Mammary epithelial cell (primary cell): ENCODE measurements at regions of chr1 and their contacts with region 1.

Region 1: GRCh38 chr1:186680245-186681061 is at the start of gene PTGS2:
- DNase-seq: peak; percentile 97
- H3K4me3 ChIP-seq: peak within 1 kb of the TSS; percentile 84 to 99 (median 97)
- H3K27ac ChIP-seq: peak within 1 kb of the TSS; percentile 98
- H3K4me1 ChIP-seq: peaks cover 7% of the 10 kb centered on the region
- H3K27me3 ChIP-seq: no peaks in the 10 kb centered on the region
- CTCF ChIP-seq: peak; percentile 43 to 80
- total RNA-seq, gene PTGS2: 11.7 to 304 TPM

Region 2: DNA sequence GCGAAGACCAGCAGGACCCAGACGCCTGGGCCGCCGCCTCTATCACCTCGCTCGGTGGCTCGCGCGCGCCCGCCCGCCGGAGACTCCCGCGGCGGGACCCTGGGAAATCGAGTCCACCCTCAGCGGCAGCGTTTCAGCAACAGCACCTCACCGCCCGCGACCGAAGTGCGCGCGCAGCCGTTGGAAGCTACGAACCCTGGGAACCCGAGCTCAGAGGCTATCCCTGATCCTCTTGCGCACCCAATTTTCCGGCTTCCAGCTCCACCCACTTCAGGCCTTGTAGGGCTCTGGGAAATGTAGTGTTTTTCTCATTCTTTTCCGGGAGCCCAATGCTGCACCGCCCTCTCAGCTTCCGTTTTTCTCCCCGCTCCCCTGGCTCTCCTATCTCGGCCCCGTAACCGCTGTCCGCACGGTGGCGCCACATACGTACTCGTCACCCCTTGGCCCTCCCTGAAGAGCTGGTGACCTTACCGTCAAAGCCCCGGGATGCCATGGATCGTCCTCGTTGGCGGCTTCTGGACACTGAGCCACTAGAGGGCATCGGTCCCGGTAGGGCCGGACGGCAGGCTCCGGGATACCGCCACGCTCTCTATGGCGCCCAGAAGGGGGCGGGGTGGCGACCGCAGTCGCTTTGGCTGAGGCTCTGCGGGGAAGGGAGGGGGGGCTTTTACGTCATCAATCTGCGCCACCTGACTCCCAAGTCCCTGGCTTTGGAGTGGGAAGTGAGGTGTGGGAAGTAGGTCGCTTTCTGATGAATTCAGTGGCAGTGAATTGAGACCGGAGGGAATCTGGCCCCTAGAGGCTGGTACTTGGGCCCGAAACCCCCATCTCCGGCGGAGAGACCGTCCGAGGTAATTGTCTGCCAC is 305.1 kb before region 1 on chr1 and contains the starts of genes ODR4 and TPR:
- CTCF ChIA-PET with region 1: interaction called, 4 read pairs
- dilution Hi-C with region 1: no loop called
- in situ Hi-C with region 1: no loop called
- intact Hi-C with region 1: loop called (anchors 1 kb)
- DNase-seq: peak; percentile 99
- H3K4me3 ChIP-seq: peak within 1 kb of the TSS; percentile 91 to 99 (median 92)
- H3K27ac ChIP-seq: peak within 1 kb of the TSS; percentile 94
- H3K4me1 ChIP-seq: peaks cover 8% of the 10 kb centered on the region
- H3K27me3 ChIP-seq: no peaks in the 10 kb centered on the region
- CTCF ChIP-seq: peak; percentile 85 to 87
- total RNA-seq, gene ODR4: 21.5 to 21.7 TPM
- total RNA-seq, gene TPR: 48.3 to 98.3 TPM

Region 3: GRCh38 chr1:186482661-186483255 is 197.7 kb before region 1 on chr1:
- CTCF ChIA-PET with region 1: interaction called, 4 read pairs
- dilution Hi-C with region 1: no loop called
- in situ Hi-C with region 1: loop called in 1 of 2 experiments (anchors 25 kb)
- intact Hi-C with region 1: loop called (anchors 1 kb)
- DNase-seq: peak; percentile 53
- H3K4me3 ChIP-seq: no peak overlapping the region
- H3K27ac ChIP-seq: no peak overlapping the region
- H3K4me1 ChIP-seq: no peaks in the 10 kb centered on the region
- H3K27me3 ChIP-seq: no peaks in the 10 kb centered on the region
- CTCF ChIP-seq: peak; percentile 98

Region 4: DNA sequence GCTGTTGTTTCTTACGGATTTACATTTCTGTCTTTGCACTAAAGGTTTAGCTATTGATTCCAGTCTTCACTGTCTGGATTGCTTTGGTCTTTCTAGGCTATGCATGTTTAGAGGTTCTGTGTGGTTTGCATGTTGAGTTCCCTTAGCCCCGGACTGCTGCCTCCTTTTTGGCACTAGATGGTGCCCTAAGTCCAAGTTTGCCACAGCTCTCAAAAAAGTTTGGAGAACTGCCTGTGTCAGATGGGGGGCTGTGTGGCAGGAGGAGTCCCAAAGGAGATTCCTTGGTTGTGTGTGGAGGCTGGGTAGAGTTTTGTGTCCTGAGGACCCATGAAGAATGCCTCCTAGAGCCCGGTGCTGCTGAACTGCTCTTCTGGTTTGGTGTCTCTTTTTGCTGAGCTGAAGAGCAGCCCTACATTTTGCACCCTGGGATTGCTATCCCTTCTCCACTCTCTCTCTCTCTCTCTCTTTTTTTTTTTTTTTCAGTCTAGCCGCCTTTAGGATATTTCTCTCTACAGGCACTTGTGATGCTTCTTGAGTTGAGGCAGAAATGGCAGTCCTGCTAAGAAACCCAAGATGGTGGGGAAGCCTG is 74.6 kb before region 1 on chr1:
- CTCF ChIA-PET with region 1: no interaction called
- dilution Hi-C with region 1: no loop called
- in situ Hi-C with region 1: no loop called
- intact Hi-C with region 1: loop called (anchors 1 kb)
- DNase-seq: peak; percentile 64
- H3K4me3 ChIP-seq: no peak overlapping the region
- H3K27ac ChIP-seq: no peak overlapping the region
- H3K4me1 ChIP-seq: no peaks in the 10 kb centered on the region
- H3K27me3 ChIP-seq: no peaks in the 10 kb centered on the region
- CTCF ChIP-seq: peak; percentile 91 to 94

Region 5: DNA sequence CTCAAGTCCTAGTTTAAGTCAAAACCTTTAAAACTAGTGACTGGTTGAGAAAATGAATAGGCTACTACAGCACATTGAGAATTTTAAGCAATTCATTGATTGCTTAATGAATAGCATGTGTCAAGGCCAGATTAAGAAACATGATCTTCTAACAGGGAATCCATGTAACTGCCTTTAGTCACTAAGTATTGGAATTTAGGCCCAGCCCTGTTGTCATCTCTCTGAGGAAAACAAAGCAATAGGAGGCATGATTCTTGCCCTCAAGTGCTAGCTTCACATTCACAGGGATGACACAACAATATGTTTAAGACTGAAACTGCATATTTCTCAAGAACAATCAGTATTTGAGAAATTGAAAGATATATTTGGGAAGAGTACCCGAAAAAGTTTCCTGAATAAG is 69.8 kb after region 1 on chr1:
- CTCF ChIA-PET with region 1: no interaction called
- dilution Hi-C with region 1: no loop called
- in situ Hi-C with region 1: no loop called
- intact Hi-C with region 1: loop called (anchors 1 kb)
- DNase-seq: peak; percentile 73
- H3K4me3 ChIP-seq: no peak overlapping the region
- H3K27ac ChIP-seq: peak overlapping the region; percentile 77
- H3K4me1 ChIP-seq: peaks cover 17% of the 10 kb centered on the region
- H3K27me3 ChIP-seq: no peaks in the 10 kb centered on the region
- CTCF ChIP-seq: no peak

Region 6: GRCh38 chr1:186806477-186806876 is 126.0 kb after region 1 on chr1:
- CTCF ChIA-PET with region 1: no interaction called
- dilution Hi-C with region 1: no loop called
- in situ Hi-C with region 1: no loop called
- intact Hi-C with region 1: loop called (anchors 1 kb)
- DNase-seq: peak; percentile 27
- H3K4me3 ChIP-seq: no peak overlapping the region
- H3K27ac ChIP-seq: no peak overlapping the region
- H3K4me1 ChIP-seq: no peaks in the 10 kb centered on the region
- H3K27me3 ChIP-seq: no peaks in the 10 kb centered on the region
- CTCF ChIP-seq: peak; percentile 35 to 59

Region 7: GRCh38 chr1:186915555-186915954 is 235.1 kb after region 1 on chr1:
- CTCF ChIA-PET with region 1: no interaction called
- dilution Hi-C with region 1: no loop called
- in situ Hi-C with region 1: no loop called
- intact Hi-C with region 1: loop called (anchors 2 kb)
- DNase-seq: no peak
- H3K4me3 ChIP-seq: no peak overlapping the region
- H3K27ac ChIP-seq: no peak overlapping the region
- H3K4me1 ChIP-seq: no peaks in the 10 kb centered on the region
- H3K27me3 ChIP-seq: no peaks in the 10 kb centered on the region
- CTCF ChIP-seq: peak in 1 of 2 donors; percentile 30